ENCODE measurements at regions of chr9 and their contacts with region 1.

Region 1: GRCh38 chr9:129177791-129178559 is at the start of gene IER5L:
- DNase-seq: peak; percentile 95 to 99
- ATAC-seq: peak; percentile 49 to 76
- H3K4me3 ChIP-seq: peak within 1 kb of the TSS; percentile 87
- H3K27ac ChIP-seq: peak within 1 kb of the TSS; percentile 99
- H3K4me1 ChIP-seq: peaks cover 55% of the 10 kb centered on the region
- CTCF ChIP-seq: no peak; the same call in 2 of the 3 replicates
- EP300 ChIP-seq: no peak
- POLR2A ChIP-seq: peak; percentile 99
- RAD21 ChIP-seq: peak in 1 of 2 experiments; percentile 43; a peak in 2 of 5 replicates
- polyA plus RNA-seq, gene IER5L: 16.8 and 25.1 TPM in 2 replicates

Region 2: GRCh38 chr9:129139993-129140396 is 38.0 kb before region 1 on chr9:
- CTCF ChIA-PET with region 1: interaction called, 1,029 read pairs
- POLR2A ChIA-PET with region 1: interaction called, 44 read pairs
- DNase-seq: peak; percentile 95 to 97
- ATAC-seq: peak; percentile 81 to 82
- H3K4me3 ChIP-seq: peak overlapping the region; percentile 44
- H3K27ac ChIP-seq: peak overlapping the region; percentile 99
- H3K4me1 ChIP-seq: peaks cover 60% of the 10 kb centered on the region
- CTCF ChIP-seq: no peak
- EP300 ChIP-seq: peak in 1 of 2 experiments; percentile 62; a peak in 1 of 5 replicates
- POLR2A ChIP-seq: peak; percentile 45
- RAD21 ChIP-seq: peak in 1 of 2 experiments; percentile 30; a peak in 2 of 5 replicates

Region 3: DNA sequence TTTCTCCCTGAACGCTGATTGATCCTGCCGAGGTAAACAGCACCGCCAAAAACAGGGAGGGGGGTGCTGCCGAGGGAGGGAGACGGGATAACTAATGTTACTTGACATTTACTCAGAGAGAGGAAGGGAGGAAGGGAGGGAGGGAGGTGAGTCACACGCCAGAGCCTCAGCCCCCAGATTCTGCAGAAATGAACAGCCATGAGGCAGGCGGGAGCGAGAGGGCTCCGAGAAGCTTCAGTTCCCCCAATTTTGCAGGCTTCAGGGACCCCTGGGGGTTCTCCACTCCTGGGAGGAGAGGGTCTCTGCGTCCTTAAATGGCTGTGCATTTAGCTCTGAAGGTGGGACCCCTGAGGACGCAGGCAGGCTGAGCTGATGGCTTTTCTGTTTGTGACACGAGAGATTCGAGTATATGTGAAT is 59.2 kb after region 1 on chr9:
- CTCF ChIA-PET with region 1: interaction called, 6 read pairs
- POLR2A ChIA-PET with region 1: interaction called, 15 read pairs
- DNase-seq: peak; percentile 37 to 41
- ATAC-seq: peak; percentile 72 to 84
- H3K4me3 ChIP-seq: no peak overlapping the region
- H3K27ac ChIP-seq: peak overlapping the region; percentile 57 to 87
- H3K4me1 ChIP-seq: peaks cover 17% of the 10 kb centered on the region
- CTCF ChIP-seq: no peak
- EP300 ChIP-seq: no peak
- POLR2A ChIP-seq: no peak
- RAD21 ChIP-seq: no peak

Region 4: DNA sequence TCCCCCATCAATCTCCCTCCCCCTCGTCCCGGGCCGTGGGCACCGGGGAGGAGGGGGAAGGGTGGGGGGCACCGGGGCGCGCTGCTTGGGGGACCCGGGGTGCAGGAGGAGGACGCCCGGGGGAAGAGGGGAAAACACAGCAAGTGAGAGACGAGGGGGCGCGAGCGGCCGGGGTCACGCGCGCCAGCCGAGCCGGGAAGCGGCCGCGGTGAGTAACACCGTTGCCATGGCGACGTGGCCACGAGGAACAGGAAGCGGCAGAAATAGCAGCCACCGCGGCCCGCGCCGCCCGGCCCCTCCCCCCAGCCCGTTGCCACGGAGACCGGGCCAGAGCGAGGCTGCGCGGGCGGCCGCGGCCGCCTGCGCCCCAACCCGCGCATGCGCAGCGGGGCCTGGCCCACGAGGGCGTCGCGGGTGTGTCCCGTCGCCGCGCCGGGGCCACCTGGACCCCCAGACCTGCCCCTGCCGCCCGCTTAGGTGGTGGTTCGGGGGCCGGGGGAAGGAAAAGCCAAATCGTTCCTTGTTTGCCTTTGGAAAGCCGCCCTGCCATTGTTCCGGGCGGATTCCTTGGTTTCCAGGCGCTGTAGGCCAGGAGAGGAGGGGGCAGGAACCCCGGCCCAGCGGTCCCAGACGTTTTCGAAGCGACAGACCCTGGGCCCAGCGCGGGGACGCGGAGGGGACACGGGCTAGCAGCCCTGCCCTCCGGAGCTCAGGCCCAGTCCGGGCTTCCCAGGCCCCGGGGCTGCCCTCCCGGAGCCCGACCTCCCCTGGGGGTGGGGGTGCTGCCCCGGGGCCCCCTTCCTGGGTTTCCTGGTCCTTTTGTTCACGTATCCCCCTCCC is 235.8 kb after region 1 on chr9:
- CTCF ChIA-PET with region 1: interaction called, 3 read pairs
- POLR2A ChIA-PET with region 1: interaction called, 15 read pairs
- DNase-seq: peak; percentile 86 to 97
- ATAC-seq: peak; percentile 80 to 84
- H3K4me3 ChIP-seq: peak overlapping the region; percentile 41
- H3K27ac ChIP-seq: peak overlapping the region; percentile 98 to 100
- H3K4me1 ChIP-seq: peaks cover 63% of the 10 kb centered on the region
- CTCF ChIP-seq: no peak
- EP300 ChIP-seq: peak; percentile 8 to 58; a peak in 2 of 5 replicates
- POLR2A ChIP-seq: no peak
- RAD21 ChIP-seq: peak in 1 of 2 experiments; percentile 60; a peak in 3 of 5 replicates

Region 5: GRCh38 chr9:129482521-129483414 is 304.8 kb after region 1 on chr9:
- CTCF ChIA-PET with region 1: interaction called, 63 read pairs
- POLR2A ChIA-PET with region 1: interaction called, 171 read pairs
- DNase-seq: peak in 1 of 2 experiments; percentile 86
- ATAC-seq: peak; percentile 47 to 64
- H3K4me3 ChIP-seq: peak overlapping the region; percentile 47
- H3K27ac ChIP-seq: peak overlapping the region; percentile 99 to 100
- H3K4me1 ChIP-seq: peaks cover 90% of the 10 kb centered on the region
- CTCF ChIP-seq: no peak; the same call in 2 of the 3 replicates
- EP300 ChIP-seq: peak; percentile 71 to 93; a peak in 4 of 5 replicates
- POLR2A ChIP-seq: peak; percentile 29; the same call in 1 of the 2 replicates
- RAD21 ChIP-seq: peak in 1 of 2 experiments; percentile 43; a peak in 2 of 5 replicates

Region 6: GRCh38 chr9:129569502-129570449 is 391.8 kb after region 1 on chr9:
- CTCF ChIA-PET with region 1: interaction called, 17 read pairs
- POLR2A ChIA-PET with region 1: interaction called, 17 read pairs
- DNase-seq: peak; percentile 70 to 90
- ATAC-seq: peak; percentile 38 to 48
- H3K4me3 ChIP-seq: no peak overlapping the region
- H3K27ac ChIP-seq: peak overlapping the region; percentile 99 to 100
- H3K4me1 ChIP-seq: peaks cover 48% of the 10 kb centered on the region
- CTCF ChIP-seq: peak; percentile 42
- EP300 ChIP-seq: no peak
- POLR2A ChIP-seq: peak; percentile 17; the same call in 1 of the 2 replicates
- RAD21 ChIP-seq: peak; percentile 27 to 44; a peak in 2 of 5 replicates